GM10248 (cell line): ENCODE measurements at regions of chr15 and their contacts with region 1.

Region 1: DNA sequence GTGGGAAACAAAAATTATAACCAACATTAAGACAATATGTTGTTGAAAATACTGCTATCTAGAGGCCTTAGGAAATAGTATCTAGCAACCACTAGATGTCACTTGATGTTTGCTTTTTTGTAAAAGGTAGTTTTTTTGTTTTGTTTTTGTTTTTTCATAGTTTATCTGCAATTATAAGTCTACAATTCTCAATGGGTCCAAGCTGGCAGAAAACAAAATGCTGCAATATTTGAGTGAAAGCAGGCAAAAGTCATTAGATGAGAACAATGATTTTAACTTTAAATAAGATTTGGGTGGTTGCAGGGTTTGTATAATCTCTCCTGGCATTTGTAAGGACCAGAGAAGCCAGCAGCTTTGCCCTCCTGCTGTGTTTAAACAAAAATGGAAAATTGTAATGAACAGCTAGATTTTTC is 27.0 kb downstream of the DUT start:
- DNase-seq: peak; percentile 35
- CTCF ChIP-seq: peak; percentile 60

Region 2: DNA sequence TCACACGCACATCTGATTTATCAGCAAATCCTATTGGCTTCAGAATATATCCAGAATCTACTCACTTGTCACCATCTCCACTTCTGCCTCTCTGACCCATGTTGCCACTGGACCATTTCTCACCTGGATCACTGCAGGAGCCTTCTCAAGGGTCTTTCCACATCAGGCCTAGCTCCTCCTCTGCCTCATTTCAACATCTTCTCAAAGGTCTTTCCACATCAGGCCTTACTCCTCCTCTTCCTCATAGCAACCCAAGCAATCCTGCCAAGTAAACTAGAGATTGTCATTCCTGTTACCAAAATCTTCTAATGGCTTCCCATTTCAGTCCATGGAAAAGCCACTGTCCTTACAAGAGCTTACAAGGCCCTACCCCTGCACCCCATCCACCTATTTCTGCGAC is 45.0 kb before region 1 on chr15:
- CTCF ChIA-PET with region 1: no interaction called
- POLR2A ChIA-PET with region 1: no interaction called
- DNase-seq: no peak
- CTCF ChIP-seq: no peak

Region 3: DNA sequence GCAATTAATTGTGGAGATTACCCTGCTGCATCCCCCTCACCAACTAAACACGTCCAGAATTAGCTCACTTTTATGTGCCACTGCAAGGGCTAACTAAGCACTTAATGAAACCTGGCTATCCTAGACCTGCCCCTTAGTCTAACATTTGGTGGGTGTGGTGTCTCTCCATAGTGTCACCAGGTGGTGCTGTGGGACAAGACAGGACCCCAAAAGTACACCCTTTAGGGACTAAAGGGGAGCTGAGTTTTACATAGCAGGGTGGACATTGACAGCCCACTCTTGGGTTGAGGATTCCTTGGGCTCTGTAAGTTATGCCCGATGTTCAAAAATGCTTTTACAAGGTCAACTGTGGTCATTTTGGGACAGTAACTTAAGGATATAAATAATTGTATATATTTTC is 21.3 kb before region 1 on chr15:
- CTCF ChIA-PET with region 1: interaction called, 34 read pairs
- POLR2A ChIA-PET with region 1: no interaction called
- DNase-seq: no peak
- CTCF ChIP-seq: peak; percentile 22

Region 4: GRCh38 chr15:48370460-48370859 is 12.2 kb after region 1 on chr15:
- CTCF ChIA-PET with region 1: interaction called, 16 read pairs
- POLR2A ChIA-PET with region 1: no interaction called
- DNase-seq: no peak
- CTCF ChIP-seq: no peak